ENCODE measurements at regions of chr18 and their contacts with region 1.

Region 1: DNA sequence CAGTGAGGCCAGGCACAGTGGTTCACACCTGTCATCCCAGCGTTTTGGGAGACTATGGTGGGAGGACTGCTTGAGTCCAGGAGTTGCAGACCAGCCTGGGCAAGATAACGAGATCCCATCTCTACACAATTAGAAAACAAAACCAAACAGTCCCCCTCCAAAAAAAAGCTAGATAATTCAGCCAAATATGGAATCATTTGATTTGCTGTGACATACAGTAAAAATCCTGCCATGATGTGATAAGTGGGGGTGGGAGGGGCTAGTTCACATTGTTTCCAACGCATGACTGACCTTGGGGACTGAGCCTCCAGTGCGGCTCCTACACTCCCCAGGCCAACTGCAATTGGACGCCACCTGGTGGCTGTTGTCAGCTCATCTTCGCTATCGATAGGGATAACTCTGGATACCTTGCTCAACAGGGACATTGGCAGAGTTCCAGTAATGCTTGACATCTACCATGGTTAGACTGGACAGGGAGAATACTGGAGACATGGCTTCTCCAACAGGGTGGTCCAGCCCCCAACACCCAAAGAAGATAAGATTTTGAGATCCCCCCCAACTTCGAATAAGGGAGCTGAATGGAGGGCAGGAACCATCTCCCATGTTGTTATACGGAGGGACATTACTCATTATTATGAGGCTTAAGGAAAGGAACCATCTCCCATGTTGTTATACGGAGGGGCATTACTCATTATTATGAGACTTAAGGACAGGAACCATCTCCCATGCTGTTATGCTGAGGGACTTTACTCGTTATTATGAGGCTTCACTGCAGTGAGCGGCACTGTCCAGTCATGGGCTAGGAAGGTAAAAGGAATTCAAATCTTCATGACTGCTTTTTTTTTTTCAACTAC is 135.9 kb downstream of the TGIF1 start:
- DNase-seq: peak; percentile 58 to 81
- H3K4me3 ChIP-seq: no peak overlapping the region
- H3K27ac ChIP-seq: no peak overlapping the region
- H3K4me1 ChIP-seq: peaks cover 33% of the 10 kb centered on the region; the same call in 1 of the 2 replicates
- H3K27me3 ChIP-seq: no peaks in the 10 kb centered on the region
- CTCF ChIP-seq: peak; percentile 67

Region 2: GRCh38 chr18:3454365-3455089 is 131.4 kb before region 1 on chr18:
- CTCF ChIA-PET with region 1: no interaction called
- POLR2A ChIA-PET with region 1: interaction called, 11 read pairs
- intact Hi-C with region 1: loop called (anchors 1 kb)
- DNase-seq: peak; percentile 41 to 52
- H3K4me3 ChIP-seq: peak overlapping the region; percentile 83
- H3K27ac ChIP-seq: peak overlapping the region; percentile 96
- H3K4me1 ChIP-seq: peaks cover 49% of the 10 kb centered on the region
- H3K27me3 ChIP-seq: no peaks in the 10 kb centered on the region; the same call in 1 of the 2 replicates
- CTCF ChIP-seq: peak; percentile 79

Region 3: GRCh38 chr18:3466045-3466444 is 119.8 kb before region 1 on chr18:
- CTCF ChIA-PET with region 1: interaction called, 6 read pairs
- POLR2A ChIA-PET with region 1: interaction called, 10 read pairs
- intact Hi-C with region 1: no loop called
- DNase-seq: no peak
- H3K4me3 ChIP-seq: no peak overlapping the region
- H3K27ac ChIP-seq: peak overlapping the region; percentile 25; the same call in 1 of the 2 replicates
- H3K4me1 ChIP-seq: no peaks in the 10 kb centered on the region
- H3K27me3 ChIP-seq: no peaks in the 10 kb centered on the region
- CTCF ChIP-seq: no peak

Region 4: GRCh38 chr18:3485153-3486149 is 100.4 kb before region 1 on chr18:
- CTCF ChIA-PET with region 1: no interaction called
- POLR2A ChIA-PET with region 1: interaction called, 36 read pairs
- intact Hi-C with region 1: no loop called
- DNase-seq: no peak
- H3K4me3 ChIP-seq: no peak overlapping the region
- H3K27ac ChIP-seq: no peak overlapping the region
- H3K4me1 ChIP-seq: no peaks in the 10 kb centered on the region
- H3K27me3 ChIP-seq: no peaks in the 10 kb centered on the region
- CTCF ChIP-seq: no peak

Region 5: GRCh38 chr18:3758531-3758930 is 172.6 kb after region 1 on chr18:
- CTCF ChIA-PET with region 1: no interaction called
- POLR2A ChIA-PET with region 1: no interaction called
- intact Hi-C with region 1: no loop called
- DNase-seq: peak in 1 of 2 experiments; percentile 56
- H3K4me3 ChIP-seq: no peak overlapping the region
- H3K27ac ChIP-seq: no peak overlapping the region
- H3K4me1 ChIP-seq: no peaks in the 10 kb centered on the region
- H3K27me3 ChIP-seq: no peaks in the 10 kb centered on the region
- CTCF ChIP-seq: no peak

Measured in PC-9 (cell line).